GM12878 (cell line): ENCODE measurements at regions of chr14 and their contacts with region 1.

Region 1: GRCh38 chr14:62126879-62127478 is 364.8 kb downstream of the SNAPC1 start:
- DNase-seq: no peak
- ATAC-seq: peak; percentile 86
- H3K4me3 ChIP-seq: no peak overlapping the region
- H3K27ac ChIP-seq: no peak overlapping the region
- H3K4me1 ChIP-seq: no peaks in the 10 kb centered on the region
- H3K27me3 ChIP-seq: no peaks in the 10 kb centered on the region; a peak in 1 of 4 replicates
- CTCF ChIP-seq: peak; percentile 71 to 76 (median 72)
- EP300 ChIP-seq: no peak
- POLR2A ChIP-seq: no peak
- RAD21 ChIP-seq: peak; percentile 99

Region 2: DNA sequence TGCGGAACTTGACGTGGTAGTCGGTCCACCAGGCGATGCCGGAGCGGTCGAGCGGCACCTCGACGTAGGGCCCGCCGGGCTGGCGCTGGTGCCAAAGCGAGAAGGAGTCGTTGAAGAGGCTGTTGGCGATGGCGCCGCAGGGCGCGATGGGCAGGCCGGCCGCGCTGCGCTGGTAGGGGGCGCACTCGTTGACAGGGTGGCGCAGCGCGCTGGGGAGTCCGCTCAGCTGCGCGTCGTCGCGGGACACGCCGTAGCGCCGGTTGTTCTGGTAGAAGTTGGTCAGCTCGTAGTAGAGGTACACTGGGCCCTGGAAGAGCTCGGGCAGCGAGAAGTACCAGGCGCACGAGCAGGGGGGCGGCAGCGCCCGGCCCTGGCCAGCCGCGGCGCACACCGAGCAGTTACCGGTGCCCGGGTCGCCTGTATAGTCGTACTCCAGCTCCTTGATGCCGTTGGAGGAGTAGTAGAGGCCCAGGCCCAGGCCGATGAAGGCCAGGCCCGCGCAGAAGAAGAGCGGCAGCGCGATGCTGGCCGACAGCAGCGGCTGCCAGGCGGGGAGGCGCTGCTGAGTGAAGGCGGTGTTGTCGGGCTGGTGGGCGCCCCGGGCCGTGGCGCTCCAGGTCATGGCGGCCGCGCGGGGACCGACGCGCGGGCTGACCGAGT is 846.3 kb before region 1 on chr14:
- CTCF ChIA-PET with region 1: interaction called, 3 read pairs
- POLR2A ChIA-PET with region 1: no interaction called
- RAD21 ChIA-PET with region 1: no interaction called
- SMC1A ChIA-PET with region 1: interaction called, 3 read pairs
- in situ Hi-C with region 1: no loop called
- intact Hi-C with region 1: loop called (anchors 10 kb)
- DNase-seq: no peak
- ATAC-seq: peak; percentile 43
- H3K4me3 ChIP-seq: peak overlapping the region; percentile 50; the same call in 1 of the 2 replicates
- H3K27ac ChIP-seq: no peak overlapping the region
- H3K4me1 ChIP-seq: no peaks in the 10 kb centered on the region
- H3K27me3 ChIP-seq: peaks cover 2 to 20% of the 10 kb centered on the region in 2 experiments
- CTCF ChIP-seq: no peak
- EP300 ChIP-seq: no peak
- POLR2A ChIP-seq: no peak
- RAD21 ChIP-seq: no peak

Region 3: DNA sequence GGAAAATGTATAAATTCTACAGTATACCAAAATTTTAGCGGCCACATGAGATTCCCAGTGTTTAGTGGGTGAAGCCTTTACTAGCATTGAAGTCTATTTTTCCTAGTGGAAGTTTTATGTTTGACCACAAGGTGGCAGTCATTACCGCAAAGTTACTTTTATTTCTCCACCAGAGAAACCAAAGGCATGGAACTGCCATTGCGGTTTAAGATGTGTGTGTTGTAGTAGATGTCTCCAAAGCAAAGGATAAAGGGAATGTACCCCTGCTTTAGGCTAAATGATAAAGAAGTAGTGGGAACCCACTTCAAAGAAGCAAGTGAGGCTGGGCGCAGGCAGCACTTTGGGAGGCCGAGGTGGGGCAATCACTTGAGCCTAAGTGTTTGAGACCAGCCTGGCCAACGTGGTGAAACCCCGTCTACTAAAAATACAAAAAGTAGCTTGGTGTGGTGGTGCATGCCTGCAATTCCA is 665.1 kb before region 1 on chr14:
- CTCF ChIA-PET with region 1: interaction called, 5 read pairs
- POLR2A ChIA-PET with region 1: no interaction called
- RAD21 ChIA-PET with region 1: no interaction called
- SMC1A ChIA-PET with region 1: no interaction called
- in situ Hi-C with region 1: loop called (anchors 5 kb)
- intact Hi-C with region 1: loop called (anchors 5 kb)
- DNase-seq: no peak
- ATAC-seq: peak; percentile 70
- H3K4me3 ChIP-seq: no peak overlapping the region
- H3K27ac ChIP-seq: no peak overlapping the region
- H3K4me1 ChIP-seq: no peaks in the 10 kb centered on the region
- H3K27me3 ChIP-seq: no peaks in the 10 kb centered on the region
- CTCF ChIP-seq: peak; percentile 42 to 67 (median 57); a peak in 5 of 6 replicates
- EP300 ChIP-seq: no peak
- POLR2A ChIP-seq: no peak
- RAD21 ChIP-seq: peak; percentile 76

Region 4: DNA sequence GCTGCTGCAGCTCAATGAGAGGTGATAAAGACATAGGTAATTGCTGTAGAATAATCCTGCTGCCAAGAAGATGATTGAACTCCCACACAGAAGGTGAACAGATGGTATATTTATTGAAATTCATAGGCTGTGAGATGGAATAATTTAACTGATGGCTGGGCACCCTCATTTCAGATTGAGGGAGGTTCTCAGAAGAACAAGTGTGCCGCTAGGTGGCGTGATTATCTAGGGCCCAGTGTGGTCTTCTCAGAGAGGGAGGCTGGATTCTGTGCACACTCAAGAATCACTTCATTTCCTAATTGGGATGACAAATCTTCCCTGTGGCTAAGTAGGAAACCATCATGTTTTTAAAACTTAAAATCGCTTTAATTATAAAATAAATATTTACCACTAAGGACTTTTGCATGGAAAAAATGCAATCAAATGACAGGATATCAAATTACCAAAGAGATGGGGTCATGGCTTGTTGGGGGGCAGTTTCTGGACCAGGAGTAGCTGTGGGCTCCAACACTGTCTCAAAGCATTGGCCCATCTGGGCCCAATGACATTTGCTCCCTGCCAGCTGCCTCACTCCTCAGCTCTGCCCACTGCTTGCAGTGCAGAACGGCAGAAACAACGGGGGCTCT is 232.4 kb before region 1 on chr14:
- CTCF ChIA-PET with region 1: interaction called, 170 read pairs
- POLR2A ChIA-PET with region 1: interaction called, 3 read pairs
- RAD21 ChIA-PET with region 1: interaction called, 122 read pairs
- SMC1A ChIA-PET with region 1: interaction called, 64 read pairs
- in situ Hi-C with region 1: loop called (anchors 10 kb)
- intact Hi-C with region 1: loop called (anchors 1 kb)
- DNase-seq: no peak
- ATAC-seq: peak; percentile 69
- H3K4me3 ChIP-seq: no peak overlapping the region
- H3K27ac ChIP-seq: no peak overlapping the region
- H3K4me1 ChIP-seq: peaks cover 11% of the 10 kb centered on the region
- H3K27me3 ChIP-seq: no peaks in the 10 kb centered on the region
- CTCF ChIP-seq: peak; percentile 69 to 77 (median 69)
- EP300 ChIP-seq: no peak
- POLR2A ChIP-seq: no peak
- RAD21 ChIP-seq: peak; percentile 80

Region 5: DNA sequence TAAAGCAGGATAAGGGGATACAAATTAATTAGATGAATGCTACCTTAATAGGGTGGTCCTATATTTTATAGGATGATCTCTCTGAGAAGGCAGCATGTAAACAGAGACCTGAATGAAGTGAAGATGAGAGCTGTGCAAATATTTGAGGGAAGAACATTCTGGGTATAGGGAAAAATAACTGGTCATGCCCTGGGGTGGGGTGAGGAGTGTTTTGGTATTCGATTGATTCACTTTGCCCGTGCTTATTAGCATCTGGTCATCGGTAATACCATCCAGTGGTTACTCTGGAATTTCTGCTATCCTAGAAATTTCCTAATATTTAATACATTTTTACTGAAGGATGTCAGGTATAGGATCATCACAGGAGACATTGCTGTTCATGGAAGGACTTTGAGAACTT is 116.7 kb before region 1 on chr14:
- CTCF ChIA-PET with region 1: interaction called, 10 read pairs
- POLR2A ChIA-PET with region 1: no interaction called
- RAD21 ChIA-PET with region 1: interaction called, 3 read pairs
- SMC1A ChIA-PET with region 1: interaction called, 4 read pairs
- in situ Hi-C with region 1: no loop called
- intact Hi-C with region 1: no loop called
- DNase-seq: no peak
- ATAC-seq: no peak
- H3K4me3 ChIP-seq: no peak overlapping the region
- H3K27ac ChIP-seq: no peak overlapping the region
- H3K4me1 ChIP-seq: no peaks in the 10 kb centered on the region
- H3K27me3 ChIP-seq: no peaks in the 10 kb centered on the region; a peak in 1 of 4 replicates
- CTCF ChIP-seq: no peak
- EP300 ChIP-seq: no peak
- POLR2A ChIP-seq: no peak
- RAD21 ChIP-seq: no peak

Region 6: DNA sequence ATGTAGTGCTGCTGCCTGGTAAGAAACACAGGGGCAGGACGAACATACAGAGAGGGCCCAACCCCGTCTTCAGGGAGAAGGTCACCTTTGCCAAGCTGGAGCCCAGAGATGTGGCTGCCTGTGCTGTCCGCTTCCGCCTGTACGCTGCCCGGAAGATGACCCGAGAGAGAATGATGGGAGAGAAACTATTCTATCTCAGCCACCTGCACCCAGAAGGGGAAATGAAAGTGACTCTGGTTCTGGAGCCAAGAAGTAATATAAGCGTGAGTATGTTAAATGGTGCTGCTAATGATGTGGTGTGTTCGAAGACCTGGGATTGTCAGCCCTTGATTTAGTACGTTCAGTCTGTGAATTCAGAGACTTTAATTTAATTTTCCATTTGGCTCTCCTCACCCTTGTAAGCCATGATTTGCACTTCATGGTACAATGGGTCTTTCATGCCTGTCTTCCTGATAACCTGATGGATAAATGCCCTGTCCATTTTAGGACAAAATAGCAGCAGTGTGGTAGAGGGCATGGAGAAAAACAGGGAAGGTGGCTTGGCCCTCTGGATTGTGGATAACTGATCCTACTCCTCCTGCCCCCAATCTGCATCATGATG is 45.9 kb before region 1 on chr14:
- CTCF ChIA-PET with region 1: interaction called, 45 read pairs
- POLR2A ChIA-PET with region 1: no interaction called
- RAD21 ChIA-PET with region 1: interaction called, 13 read pairs
- SMC1A ChIA-PET with region 1: interaction called, 20 read pairs
- in situ Hi-C with region 1: no loop called
- intact Hi-C with region 1: no loop called
- DNase-seq: peak; percentile 75
- ATAC-seq: peak; percentile 95
- H3K4me3 ChIP-seq: peak overlapping the region; percentile 37
- H3K27ac ChIP-seq: peak overlapping the region; percentile 88
- H3K4me1 ChIP-seq: peaks cover 51% of the 10 kb centered on the region
- H3K27me3 ChIP-seq: no peaks in the 10 kb centered on the region
- CTCF ChIP-seq: no peak
- EP300 ChIP-seq: peak; percentile 80 to 94; a peak in 3 of 4 replicates
- POLR2A ChIP-seq: peak; percentile 61
- RAD21 ChIP-seq: no peak

Region 7: DNA sequence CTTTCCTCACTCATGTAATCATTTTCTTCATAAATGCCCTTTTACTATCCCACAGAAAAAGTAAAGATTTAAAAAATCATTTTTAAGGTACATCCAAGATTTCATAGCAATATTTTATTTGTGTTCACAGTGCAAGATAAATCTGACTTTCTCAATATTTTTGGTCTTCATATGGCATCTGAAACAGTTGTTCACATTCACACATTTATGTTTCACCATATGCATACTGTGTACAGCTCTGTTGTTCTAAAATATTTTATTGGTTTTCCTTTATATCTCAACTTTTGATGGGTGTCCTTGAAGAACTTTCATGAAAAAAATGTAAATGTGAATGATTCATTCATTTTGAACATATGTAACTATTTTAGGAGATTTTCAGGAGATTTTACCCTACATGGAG is 16.0 kb before region 1 on chr14:
- CTCF ChIA-PET with region 1: interaction called, 64 read pairs
- POLR2A ChIA-PET with region 1: no interaction called
- RAD21 ChIA-PET with region 1: interaction called, 32 read pairs
- SMC1A ChIA-PET with region 1: interaction called, 26 read pairs
- in situ Hi-C with region 1: no loop called
- intact Hi-C with region 1: no loop called
- DNase-seq: no peak
- ATAC-seq: no peak
- H3K4me3 ChIP-seq: no peak overlapping the region
- H3K27ac ChIP-seq: no peak overlapping the region
- H3K4me1 ChIP-seq: no peaks in the 10 kb centered on the region
- H3K27me3 ChIP-seq: peaks cover 0 to 3% of the 10 kb centered on the region in 2 experiments; a peak in 1 of 4 replicates
- CTCF ChIP-seq: no peak
- EP300 ChIP-seq: no peak
- POLR2A ChIP-seq: no peak
- RAD21 ChIP-seq: no peak

Region 8: GRCh38 chr14:62162998-62163589 is 36.1 kb after region 1 on chr14:
- CTCF ChIA-PET with region 1: no interaction called
- POLR2A ChIA-PET with region 1: no interaction called
- RAD21 ChIA-PET with region 1: no interaction called
- SMC1A ChIA-PET with region 1: no interaction called
- in situ Hi-C with region 1: no loop called
- intact Hi-C with region 1: no loop called
- DNase-seq: no peak
- ATAC-seq: peak; percentile 77
- H3K4me3 ChIP-seq: no peak overlapping the region
- H3K27ac ChIP-seq: no peak overlapping the region
- H3K4me1 ChIP-seq: no peaks in the 10 kb centered on the region
- H3K27me3 ChIP-seq: 0 out of 4 replicates have a peak, but pooled peaks cover 0 to 1% of the 10 kb centered on the region in 2 experiments
- CTCF ChIP-seq: peak; percentile 70 to 84 (median 79)
- EP300 ChIP-seq: no peak
- POLR2A ChIP-seq: no peak
- RAD21 ChIP-seq: peak; percentile 83